Common myeloid progenitor, CD34-positive (primary cell): ENCODE measurements at regions of chr9 and their contacts with region 1.

Region 1: GRCh38 chr9:124420991-124421543 is 5.8 kb upstream of the PSMB7 start:
- DNase-seq: peak; percentile 31 to 77 (median 68)
- H3K4me3 ChIP-seq: no peak overlapping the region
- H3K27ac ChIP-seq: no peak overlapping the region
- H3K4me1 ChIP-seq: peaks cover 0 to 4% (median 2%) of the 10 kb centered on the region in 4 experiments
- H3K27me3 ChIP-seq: no peaks in the 10 kb centered on the region

Region 2: DNA sequence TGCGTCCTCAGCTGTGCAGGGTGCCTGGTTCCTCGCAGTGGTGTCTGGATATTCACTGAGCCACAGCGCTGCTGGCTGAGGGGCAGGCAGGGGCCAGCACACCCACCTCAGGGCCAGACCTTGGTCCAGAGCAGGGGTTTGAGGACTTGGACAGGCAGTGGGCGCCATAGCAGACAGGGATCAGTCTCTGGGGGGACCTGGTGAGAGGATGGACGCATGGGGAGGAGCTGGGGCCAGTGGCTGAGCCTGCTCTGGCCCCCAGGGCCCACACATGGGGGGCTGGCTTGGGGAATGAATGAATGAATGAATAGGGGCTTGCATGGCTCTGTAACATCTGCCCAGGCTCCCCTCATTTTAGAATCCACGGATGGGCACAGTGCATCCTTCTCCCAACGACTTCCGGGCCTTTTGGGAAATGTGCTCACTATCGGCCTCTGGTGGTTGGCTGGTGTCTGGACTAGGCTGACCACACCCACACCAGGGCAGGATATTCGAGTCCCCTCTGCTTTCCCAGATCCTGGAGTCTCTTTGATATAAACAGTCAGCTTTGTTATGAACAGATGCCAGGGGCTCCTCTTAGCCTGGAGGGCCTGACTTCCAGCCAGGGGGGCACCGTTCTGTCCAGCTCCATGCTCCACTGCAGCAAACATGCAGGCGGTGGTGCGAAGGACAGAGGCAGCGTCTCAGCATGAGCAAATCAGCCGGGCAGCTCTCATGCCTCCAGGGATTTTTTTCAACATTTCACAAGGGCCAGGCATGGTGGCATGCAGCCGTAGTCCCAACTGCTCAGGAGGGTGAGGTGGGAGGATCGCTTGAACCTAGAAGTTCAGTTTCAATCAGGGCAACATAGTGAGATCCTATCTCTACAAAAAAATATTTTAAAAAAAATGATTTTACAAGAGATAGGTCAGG is 100.7 kb before region 1 on chr9:
- CTCF ChIA-PET with region 1: no interaction called
- POLR2A ChIA-PET with region 1: no interaction called
- DNase-seq: peak; percentile 29 to 43 (median 34)
- H3K4me3 ChIP-seq: no peak overlapping the region
- H3K27ac ChIP-seq: no peak overlapping the region
- H3K4me1 ChIP-seq: peaks cover 0 to 20% (median 8%) of the 10 kb centered on the region in 4 experiments
- H3K27me3 ChIP-seq: no peaks in the 10 kb centered on the region

Region 3: DNA sequence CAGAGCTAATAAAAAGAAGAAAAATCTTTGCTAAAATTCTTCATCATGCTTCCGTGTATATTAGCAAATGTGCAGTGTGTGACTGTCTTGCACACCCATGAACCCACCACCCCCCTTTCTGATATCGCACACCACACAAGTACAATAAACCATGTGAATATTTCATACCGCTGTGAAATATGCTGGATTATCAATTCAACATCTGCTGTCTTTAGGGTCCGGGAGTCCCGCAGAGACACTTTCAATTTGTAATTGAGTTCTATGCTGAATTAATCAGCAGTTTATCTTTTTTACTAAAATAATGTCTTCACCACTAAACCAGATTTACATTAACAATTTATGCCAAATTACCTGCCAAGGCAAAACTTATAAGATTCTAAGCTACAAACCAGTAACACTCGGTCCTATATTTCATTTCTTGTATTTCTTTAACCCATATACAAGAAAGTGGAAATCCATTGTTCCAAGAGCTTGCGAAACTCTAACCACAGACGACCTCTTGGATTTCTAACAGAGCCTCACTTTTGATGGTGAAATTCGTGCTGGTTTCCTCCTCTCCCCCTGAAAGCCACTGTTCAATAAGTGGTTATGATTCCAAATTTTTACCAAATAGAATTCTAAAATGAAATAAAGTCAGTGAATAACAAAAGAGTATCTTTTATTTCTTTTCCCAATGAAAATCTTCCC is 50.0 kb before region 1 on chr9:
- CTCF ChIA-PET with region 1: no interaction called
- POLR2A ChIA-PET with region 1: no interaction called
- DNase-seq: peak in 1 of 3 donors; percentile 8
- H3K4me3 ChIP-seq: no peak overlapping the region
- H3K27ac ChIP-seq: no peak overlapping the region
- H3K4me1 ChIP-seq: peaks cover 0 to 7% (median 0%) of the 10 kb centered on the region in 4 experiments
- H3K27me3 ChIP-seq: no peaks in the 10 kb centered on the region

Region 4: DNA sequence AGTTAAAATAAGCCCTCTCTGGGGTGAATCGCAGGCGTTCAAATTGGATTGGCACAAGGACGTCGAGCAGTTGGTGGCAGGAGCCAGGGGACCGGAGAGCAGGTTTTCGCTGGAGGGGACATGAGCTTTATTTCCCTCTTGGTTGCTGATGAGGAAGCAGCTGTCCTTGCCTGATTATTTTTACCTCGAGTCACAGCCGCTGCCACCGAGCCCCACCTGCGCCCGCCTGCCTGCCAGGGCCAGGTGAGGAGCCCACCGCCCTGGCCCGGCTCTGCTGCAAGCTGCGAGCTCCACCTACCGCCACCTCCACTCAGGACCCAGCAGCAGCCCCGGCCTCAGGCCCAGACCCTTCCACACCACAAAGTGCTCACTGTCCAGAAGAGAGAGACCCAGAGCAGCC is 20.2 kb after region 1 on chr9:
- CTCF ChIA-PET with region 1: interaction called, 51 read pairs
- POLR2A ChIA-PET with region 1: no interaction called
- DNase-seq: peak; percentile 38 to 93 (median 85)
- H3K4me3 ChIP-seq: no peak overlapping the region
- H3K27ac ChIP-seq: no peak overlapping the region
- H3K4me1 ChIP-seq: peaks cover 0 to 10% (median 5%) of the 10 kb centered on the region in 4 experiments
- H3K27me3 ChIP-seq: peaks cover 0 to 4% (median 0%) of the 10 kb centered on the region in 5 experiments

Region 5: DNA sequence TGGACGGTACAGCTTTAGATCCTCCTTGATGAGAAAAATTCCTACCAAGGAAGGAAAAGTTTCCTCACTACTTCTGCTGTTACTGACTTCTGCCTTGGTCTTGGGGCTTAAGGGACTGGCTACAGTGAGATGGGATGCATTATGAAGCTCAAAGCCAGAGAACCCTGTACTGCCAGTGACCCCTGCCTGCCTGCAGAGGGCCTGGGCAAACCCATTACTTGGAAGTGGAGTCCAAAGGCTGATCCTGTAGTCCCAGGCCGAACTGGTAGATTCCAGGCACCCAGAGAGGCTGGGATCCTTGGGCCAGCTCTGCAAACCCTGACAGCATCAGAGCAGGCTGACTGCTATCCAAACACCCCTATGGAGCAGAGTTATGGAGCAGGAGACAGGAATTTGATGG is 111.8 kb after region 1 on chr9:
- CTCF ChIA-PET with region 1: interaction called, 79 read pairs
- POLR2A ChIA-PET with region 1: no interaction called
- DNase-seq: no peak
- H3K4me3 ChIP-seq: no peak overlapping the region
- H3K27ac ChIP-seq: no peak overlapping the region
- H3K4me1 ChIP-seq: peaks cover 0 to 2% (median 0%) of the 10 kb centered on the region in 4 experiments
- H3K27me3 ChIP-seq: no peaks in the 10 kb centered on the region

Region 6: DNA sequence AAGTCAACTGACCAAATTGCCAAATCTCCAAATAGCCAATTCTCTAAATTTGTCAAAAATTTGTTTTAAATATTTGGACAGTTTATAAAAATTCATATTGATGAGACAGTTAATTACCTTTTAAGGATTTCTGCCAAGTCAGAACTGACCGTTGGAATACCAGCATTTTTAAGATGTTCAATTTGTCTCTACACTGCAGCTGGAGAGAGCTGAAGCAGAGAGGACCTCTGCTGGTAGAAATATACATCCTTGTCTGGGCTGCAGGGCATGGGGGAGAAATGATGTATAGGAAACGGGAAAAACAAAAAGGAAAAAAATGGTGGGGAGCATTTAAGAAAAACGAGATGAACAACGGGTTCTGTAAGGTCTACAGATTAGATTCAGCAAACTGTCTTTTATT is 333.2 kb after region 1 on chr9:
- CTCF ChIA-PET with region 1: no interaction called
- POLR2A ChIA-PET with region 1: no interaction called
- DNase-seq: no peak
- H3K4me3 ChIP-seq: no peak overlapping the region
- H3K27ac ChIP-seq: no peak overlapping the region
- H3K4me1 ChIP-seq: peaks cover 22 to 44% (median 34%) of the 10 kb centered on the region in 4 experiments
- H3K27me3 ChIP-seq: no peaks in the 10 kb centered on the region